ENCODE measurements at regions of chr3 and their contacts with region 1.

Region 1: GRCh38 chr3:52278510-52279069 is at the start of gene WDR82:
- DNase-seq: peak; percentile 100
- ATAC-seq: peak; percentile 70
- H3K4me3 Mint-ChIP-seq: peak within 1 kb of the TSS; percentile 98
- H3K27ac Mint-ChIP-seq: peak within 1 kb of the TSS; percentile 99
- H3K4me1 Mint-ChIP-seq: peaks cover 51% of the 10 kb centered on the region
- H3K27me3 Mint-ChIP-seq: no peaks in the 10 kb centered on the region
- total RNA-seq, gene WDR82: 134 to 140 TPM

Region 2: GRCh38 chr3:52225452-52226228 is 53.0 kb before region 1 on chr3 and contains the start of gene TLR9:
- POLR2A ChIA-PET with region 1: interaction called, 1,053 read pairs
- DNase-seq: peak; percentile 48
- ATAC-seq: peak; percentile 32
- H3K4me3 Mint-ChIP-seq: peak within 1 kb of the TSS; percentile 85
- H3K27ac Mint-ChIP-seq: peak within 1 kb of the TSS; percentile 79
- H3K4me1 Mint-ChIP-seq: peaks cover 51% of the 10 kb centered on the region
- H3K27me3 Mint-ChIP-seq: no peaks in the 10 kb centered on the region
- total RNA-seq, gene TLR9: 1.6 to 2.0 TPM

Region 3: GRCh38 chr3:52238761-52239701 is 39.6 kb before region 1 on chr3 and contains the start of gene TWF2:
- POLR2A ChIA-PET with region 1: interaction called, 1,053 read pairs
- DNase-seq: peak; percentile 98
- ATAC-seq: peak; percentile 72
- H3K4me3 Mint-ChIP-seq: peak within 1 kb of the TSS; percentile 99
- H3K27ac Mint-ChIP-seq: peak within 1 kb of the TSS; percentile 96
- H3K4me1 Mint-ChIP-seq: peaks cover 57% of the 10 kb centered on the region
- H3K27me3 Mint-ChIP-seq: no peaks in the 10 kb centered on the region
- total RNA-seq, gene TWF2: 118 to 122 TPM

Region 4: DNA sequence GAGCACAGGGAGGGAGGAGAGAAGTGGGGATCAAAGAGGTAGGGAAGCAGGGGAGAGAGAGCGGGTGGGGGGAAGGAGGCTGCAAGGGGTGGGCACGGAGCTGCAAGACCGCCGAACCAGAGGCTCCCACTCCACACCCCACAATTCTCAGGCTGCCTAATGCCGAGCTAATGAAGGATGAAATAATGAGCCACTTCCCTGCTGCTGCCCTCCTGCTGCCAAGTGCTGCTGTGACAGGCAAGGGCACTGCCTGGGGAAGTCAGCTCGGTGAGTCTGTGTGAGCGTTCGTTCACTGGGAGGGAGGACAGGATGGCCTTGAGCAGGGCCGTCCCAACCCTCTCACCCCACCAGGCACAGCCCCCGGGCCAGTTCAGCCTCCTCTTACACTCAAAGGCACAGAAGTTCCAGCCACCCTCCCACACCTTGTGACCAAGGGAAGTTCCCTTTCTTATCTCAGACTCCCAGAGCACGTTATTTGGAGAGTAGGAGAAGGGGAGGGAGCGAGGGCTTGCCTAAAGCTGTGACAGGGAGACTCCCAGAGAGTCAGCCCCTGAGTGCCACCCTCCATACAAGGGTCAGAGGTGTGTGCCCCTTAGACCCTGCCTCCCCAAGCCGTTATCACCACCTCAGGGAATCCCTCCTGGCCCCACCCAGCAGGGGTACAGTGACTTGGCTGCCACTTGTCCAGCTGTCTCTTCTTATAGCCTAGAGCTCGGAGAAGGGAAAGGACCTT is 21.5 kb after region 1 on chr3:
- POLR2A ChIA-PET with region 1: no interaction called
- DNase-seq: no peak
- ATAC-seq: peak; percentile 11
- H3K4me3 Mint-ChIP-seq: no peak overlapping the region
- H3K27ac Mint-ChIP-seq: peak overlapping the region; percentile 46
- H3K4me1 Mint-ChIP-seq: no peaks in the 10 kb centered on the region
- H3K27me3 Mint-ChIP-seq: no peaks in the 10 kb centered on the region

Region 5: DNA sequence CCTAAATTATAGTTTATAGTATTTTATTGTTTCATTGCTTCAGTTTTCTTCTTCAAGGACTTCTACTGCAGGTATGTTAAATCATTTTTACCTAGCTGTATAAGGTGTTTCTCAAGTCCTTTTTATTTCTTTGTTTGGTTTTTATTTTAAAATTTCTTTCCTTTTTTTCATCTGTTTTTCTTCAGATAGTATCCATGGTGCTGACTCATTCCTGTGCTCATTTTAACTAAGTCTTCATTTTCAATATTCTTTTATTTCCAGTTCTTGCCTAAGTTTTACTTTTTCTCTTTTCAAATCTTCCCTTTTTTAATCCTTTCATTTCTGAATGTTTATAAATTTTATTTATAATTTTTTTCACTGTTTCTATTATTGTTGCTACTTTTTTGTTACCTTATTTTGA is 661.0 kb after region 1 on chr3:
- POLR2A ChIA-PET with region 1: no interaction called
- DNase-seq: no peak
- ATAC-seq: no peak
- H3K4me3 Mint-ChIP-seq: no peak overlapping the region
- H3K27ac Mint-ChIP-seq: no peak overlapping the region
- H3K4me1 Mint-ChIP-seq: peaks cover 6% of the 10 kb centered on the region
- H3K27me3 Mint-ChIP-seq: no peaks in the 10 kb centered on the region